ENCODE measurements at regions of chr15 and their contacts with region 1.

Region 1: GRCh38 chr15:41904541-41905005 is 10.7 kb upstream of the SPTBN5 start:
- DNase-seq: peak; percentile 82
- H3K4me3 Mint-ChIP-seq: no peak overlapping the region
- H3K27ac Mint-ChIP-seq: no peak overlapping the region
- H3K4me1 Mint-ChIP-seq: peaks cover 11% of the 10 kb centered on the region
- H3K27me3 Mint-ChIP-seq: no peaks in the 10 kb centered on the region

Region 2: DNA sequence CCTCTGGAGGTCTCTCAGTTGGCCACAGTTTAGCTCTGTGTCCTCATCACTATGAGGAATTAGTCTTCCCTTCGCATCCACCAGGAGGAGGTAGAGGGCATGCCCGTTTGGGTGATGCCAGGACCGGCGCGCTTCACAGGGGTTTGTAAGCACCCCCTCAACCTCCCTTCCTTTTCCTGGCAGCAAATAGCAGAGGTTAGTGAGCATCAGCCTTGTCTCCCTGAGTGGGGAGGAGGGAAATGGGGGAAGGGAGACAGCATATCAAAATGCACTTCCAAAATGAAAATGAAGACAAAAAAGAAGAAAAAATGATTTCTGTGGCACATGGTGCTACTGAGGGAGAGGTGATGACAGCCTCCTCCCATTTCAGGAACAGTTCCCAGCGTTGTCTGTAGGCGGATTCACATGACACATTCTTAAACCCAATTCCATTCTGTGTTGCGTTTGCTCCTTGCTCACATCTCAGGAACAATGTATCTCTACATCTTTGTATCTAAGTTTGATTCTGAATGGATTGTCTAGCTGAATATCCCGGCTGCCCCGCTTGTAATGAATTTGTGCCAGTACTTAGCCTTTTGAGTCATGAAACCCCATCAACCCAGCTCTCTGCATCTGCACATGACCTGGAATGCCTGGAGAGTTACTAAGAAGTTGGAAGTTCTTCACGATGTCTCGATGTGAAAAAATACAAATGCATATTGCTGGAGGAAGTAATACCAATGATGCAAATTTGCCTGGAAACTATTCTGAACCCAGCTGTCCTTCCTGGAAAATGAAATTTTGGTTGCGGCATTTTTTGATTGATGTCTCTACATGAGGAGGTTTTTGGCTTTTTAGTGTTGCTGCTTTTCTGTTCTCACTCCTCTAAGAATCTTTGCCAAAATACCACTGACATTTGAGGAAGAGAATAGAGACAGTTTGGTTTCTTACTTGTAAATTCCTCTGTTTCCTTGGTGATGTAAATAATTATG is 300.3 kb before region 1 on chr15:
- CTCF ChIA-PET with region 1: interaction called, 4 read pairs
- intact Hi-C with region 1: loop called (anchors 5 kb)
- DNase-seq: peak; percentile 72
- H3K4me3 Mint-ChIP-seq: peak overlapping the region; percentile 69
- H3K27ac Mint-ChIP-seq: no peak overlapping the region
- H3K4me1 Mint-ChIP-seq: peaks cover 11% of the 10 kb centered on the region
- H3K27me3 Mint-ChIP-seq: peaks cover 2% of the 10 kb centered on the region

Region 3: DNA sequence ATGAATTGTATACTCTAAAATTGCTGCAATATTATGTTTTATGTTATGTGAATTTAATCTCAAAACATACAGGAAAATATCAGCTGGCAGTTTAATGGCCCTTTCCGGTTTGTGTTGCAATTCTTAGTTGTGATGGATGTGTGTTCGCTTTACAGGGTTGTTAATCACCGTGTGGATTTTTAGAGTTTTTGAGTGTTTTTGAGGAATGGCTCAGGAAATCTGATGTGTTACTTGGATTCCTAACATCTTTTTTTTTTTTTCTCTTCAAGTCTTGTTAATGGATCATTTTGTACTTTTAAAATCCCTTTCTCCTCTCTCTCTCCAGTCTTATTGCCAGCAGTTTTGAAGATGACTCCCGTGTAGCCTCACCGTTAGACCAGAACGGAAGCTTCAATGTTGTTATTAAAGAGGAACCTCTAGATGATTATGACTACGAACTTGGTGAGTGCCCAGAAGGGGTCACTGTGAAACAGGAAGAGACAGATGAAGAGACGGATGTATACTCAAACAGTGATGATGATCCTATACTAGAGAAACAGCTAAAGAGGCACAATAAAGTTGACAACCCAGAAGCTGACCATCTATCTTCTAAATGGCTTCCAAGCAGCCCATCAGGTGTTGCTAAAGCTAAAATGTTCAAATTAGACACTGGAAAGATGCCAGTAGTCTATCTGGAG is 208.7 kb before region 1 on chr15:
- CTCF ChIA-PET with region 1: interaction called, 3 read pairs
- intact Hi-C with region 1: loop called (anchors 1 kb)
- DNase-seq: peak; percentile 78
- H3K4me3 Mint-ChIP-seq: peak overlapping the region; percentile 22
- H3K27ac Mint-ChIP-seq: peak overlapping the region; percentile 76
- H3K4me1 Mint-ChIP-seq: peaks cover 48% of the 10 kb centered on the region
- H3K27me3 Mint-ChIP-seq: no peaks in the 10 kb centered on the region

Region 4: GRCh38 chr15:41827880-41828806 is 76.4 kb before region 1 on chr15 and contains the start of gene JMJD7:
- CTCF ChIA-PET with region 1: no interaction called
- intact Hi-C with region 1: loop called (anchors 2 kb)
- DNase-seq: peak; percentile 97
- H3K4me3 Mint-ChIP-seq: peak within 1 kb of the TSS; percentile 82
- H3K27ac Mint-ChIP-seq: peak within 1 kb of the TSS; percentile 59
- H3K4me1 Mint-ChIP-seq: peaks cover 42% of the 10 kb centered on the region
- H3K27me3 Mint-ChIP-seq: no peaks in the 10 kb centered on the region
- total RNA-seq, gene JMJD7: 18.7 to 19.8 TPM

Region 5: GRCh38 chr15:41915255-41915994 is 10.9 kb after region 1 on chr15:
- CTCF ChIA-PET with region 1: interaction called, 11 read pairs
- intact Hi-C with region 1: no loop called
- DNase-seq: no peak
- H3K4me3 Mint-ChIP-seq: no peak overlapping the region
- H3K27ac Mint-ChIP-seq: no peak overlapping the region
- H3K4me1 Mint-ChIP-seq: peaks cover 2% of the 10 kb centered on the region
- H3K27me3 Mint-ChIP-seq: no peaks in the 10 kb centered on the region